Mucosa of descending colon (tissue), 3 donors: ENCODE measurements at regions of chr1 and their contacts with region 1.

Region 1: DNA sequence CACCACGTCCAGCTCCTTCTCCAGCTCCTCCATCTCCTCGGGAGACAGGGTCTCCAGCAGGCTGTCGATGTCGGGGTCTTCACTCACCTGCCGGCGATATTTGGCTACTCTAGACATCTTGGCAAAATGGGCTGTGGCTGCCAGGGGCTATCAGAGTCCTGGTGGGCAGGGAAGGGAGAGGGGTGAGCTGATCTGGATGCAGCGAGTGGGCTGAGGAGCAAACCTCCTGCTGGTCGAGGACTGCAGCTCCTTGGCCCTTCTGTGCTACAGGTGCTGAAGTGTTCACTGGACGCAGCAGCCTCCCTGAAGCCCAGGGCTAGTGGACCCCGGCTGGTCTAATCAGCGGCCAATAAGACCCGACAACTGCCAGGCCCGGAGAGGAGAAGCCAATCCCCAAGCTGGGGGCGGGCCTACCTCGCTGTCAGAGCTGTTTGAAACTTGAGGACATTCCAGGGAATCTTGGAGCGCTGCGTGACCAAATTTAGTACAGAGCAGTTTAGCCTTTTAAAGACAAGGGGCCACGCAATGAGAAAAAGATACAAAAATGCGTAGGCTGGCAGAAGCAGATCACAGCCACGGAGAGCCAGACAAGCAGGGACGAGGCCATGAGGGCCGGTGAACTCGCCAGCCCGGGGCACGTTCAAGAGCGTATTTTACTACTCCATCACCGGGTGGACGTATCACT is at the start of gene LMOD1:
- DNase-seq: peak; percentile 67 to 81 (median 68)
- ATAC-seq: peak; percentile 85
- H3K4me3 ChIP-seq: no peak within 1 kb of the TSS
- H3K4me1 ChIP-seq: no peaks in the 10 kb centered on the region
- CTCF ChIP-seq: no peak
- total RNA-seq, gene LMOD1: 11.6 to 442 (median 37.4) TPM

Region 2: GRCh38 chr1:201828820-201829774 is 117.3 kb before region 1 on chr1 and contains the start of gene IPO9:
- intact Hi-C with region 1: no loop called
- DNase-seq: peak; percentile 93 to 97 (median 96)
- ATAC-seq: peak; percentile 100
- H3K4me3 ChIP-seq: peak within 1 kb of the TSS; percentile 88
- H3K4me1 ChIP-seq: peaks cover 21% of the 10 kb centered on the region
- CTCF ChIP-seq: peak; percentile 97
- total RNA-seq, gene IPO9: 25.9 to 33.9 (median 28.4) TPM

Region 3: GRCh38 chr1:201895913-201896807 is 50.2 kb before region 1 on chr1:
- intact Hi-C with region 1: loop called in 1 of 2 experiments (anchors 5 kb)
- DNase-seq: peak; percentile 82 to 93 (median 93)
- ATAC-seq: peak; percentile 95
- H3K4me3 ChIP-seq: no peak overlapping the region
- H3K4me1 ChIP-seq: no peaks in the 10 kb centered on the region
- CTCF ChIP-seq: peak; percentile 88

Region 4: DNA sequence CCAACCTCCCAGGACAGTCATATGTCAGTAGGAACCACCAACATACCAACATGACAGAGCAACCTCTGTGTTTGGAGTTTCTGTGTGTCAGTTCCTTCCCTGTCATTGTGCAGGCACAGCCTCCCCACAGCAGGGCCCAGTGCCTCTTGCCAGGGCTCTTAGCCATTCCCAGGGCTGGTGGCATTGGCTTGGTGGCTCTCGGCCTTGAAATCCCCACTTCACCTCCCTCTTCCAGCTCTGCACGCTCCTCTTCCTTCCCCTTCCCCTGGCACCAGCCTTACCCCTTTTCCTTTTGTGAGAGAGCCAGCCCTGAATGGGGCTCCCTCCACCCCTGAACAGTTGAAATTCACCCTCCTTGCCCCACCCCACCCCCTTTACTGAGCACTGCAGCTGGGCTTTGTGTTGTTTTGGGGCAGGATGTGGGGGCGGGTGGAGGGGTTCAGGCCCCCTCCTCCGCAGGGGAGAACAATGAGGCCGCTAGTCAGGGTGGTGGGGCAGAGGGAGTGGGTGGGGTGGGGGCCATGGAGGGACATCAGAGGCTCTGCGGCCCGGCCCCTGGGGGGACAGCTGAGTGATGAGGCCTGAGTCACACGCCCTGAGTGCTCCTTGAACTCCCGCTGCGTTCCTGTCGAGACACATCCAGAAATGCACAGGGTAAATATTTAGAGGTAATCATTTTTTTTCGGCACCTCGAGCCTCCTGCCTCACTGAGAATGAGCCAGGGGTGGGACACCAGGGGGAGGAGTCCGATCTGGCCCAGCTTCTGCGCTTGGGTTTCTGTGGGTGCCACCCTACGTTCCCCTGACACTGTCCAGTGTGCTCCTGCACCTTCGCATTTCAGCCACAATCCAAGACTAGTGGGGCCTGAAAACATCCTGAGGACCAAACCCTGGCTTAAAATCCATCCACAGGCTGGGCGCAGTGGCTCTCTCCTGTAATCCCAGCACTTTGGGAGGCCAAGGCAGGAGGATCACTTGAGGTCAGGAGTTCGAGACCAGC is 275.8 kb after region 1 on chr1:
- intact Hi-C with region 1: no loop called
- DNase-seq: no peak
- ATAC-seq: no peak
- H3K4me3 ChIP-seq: no peak overlapping the region
- H3K4me1 ChIP-seq: peaks cover 2% of the 10 kb centered on the region
- CTCF ChIP-seq: no peak